IMR-90 (cell line): ENCODE measurements at regions of chr20 and their contacts with region 1.

Region 1: DNA sequence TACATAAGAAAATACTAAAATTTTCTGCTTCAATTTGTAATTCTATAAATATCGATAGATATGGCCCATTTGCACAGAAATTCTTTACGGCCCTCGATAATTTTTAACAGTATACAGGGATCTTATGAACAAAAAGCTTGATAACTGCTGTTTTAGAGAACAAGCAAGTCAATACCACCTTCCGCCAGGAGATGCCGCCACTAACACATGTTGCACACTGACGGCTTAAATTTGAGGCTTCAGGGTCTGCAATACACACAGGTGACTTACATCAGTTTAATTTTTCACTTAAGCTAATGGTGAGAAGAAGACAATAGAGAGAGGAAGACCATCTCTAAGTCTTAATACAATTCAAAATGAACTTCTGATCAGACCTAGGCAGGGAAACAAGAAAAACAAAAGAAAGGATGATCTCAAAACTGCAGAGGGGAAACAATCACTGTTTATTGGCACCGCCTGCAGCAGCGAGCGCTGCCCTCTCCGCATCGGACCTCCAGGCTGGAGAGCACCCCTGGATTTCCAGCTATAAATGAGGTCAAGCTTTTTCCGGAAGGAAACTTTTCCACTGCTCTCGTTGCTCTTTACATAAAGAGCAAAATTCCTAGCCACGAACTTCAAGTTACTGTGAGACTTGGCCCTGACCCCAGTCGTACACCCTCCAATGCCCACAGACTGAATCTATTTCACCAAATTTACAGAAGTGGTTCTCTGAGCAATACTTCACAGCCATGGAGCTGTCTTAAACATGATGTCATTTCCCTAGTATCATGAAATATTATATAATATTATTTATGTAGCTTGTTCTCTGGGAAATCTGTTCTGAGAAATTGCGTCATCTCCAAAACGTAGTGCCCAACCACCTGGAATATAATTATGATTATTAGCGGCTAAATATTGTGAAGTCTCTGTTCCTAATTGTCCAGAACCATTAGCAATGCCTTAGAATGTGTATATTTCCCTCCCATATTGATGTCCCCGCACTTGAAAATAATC is 54.1 kb downstream of the OTOR start:
- DNase-seq: peak; percentile 53
- ATAC-seq: peak; percentile 81
- H3K4me3 ChIP-seq: no peak overlapping the region
- H3K27ac ChIP-seq: no peak overlapping the region
- H3K4me1 ChIP-seq: no peaks in the 10 kb centered on the region
- H3K27me3 ChIP-seq: peaks cover 6% of the 10 kb centered on the region
- CTCF ChIP-seq: peak; percentile 92
- POLR2A ChIP-seq: no peak
- RAD21 ChIP-seq: peak; percentile 87

Region 2: DNA sequence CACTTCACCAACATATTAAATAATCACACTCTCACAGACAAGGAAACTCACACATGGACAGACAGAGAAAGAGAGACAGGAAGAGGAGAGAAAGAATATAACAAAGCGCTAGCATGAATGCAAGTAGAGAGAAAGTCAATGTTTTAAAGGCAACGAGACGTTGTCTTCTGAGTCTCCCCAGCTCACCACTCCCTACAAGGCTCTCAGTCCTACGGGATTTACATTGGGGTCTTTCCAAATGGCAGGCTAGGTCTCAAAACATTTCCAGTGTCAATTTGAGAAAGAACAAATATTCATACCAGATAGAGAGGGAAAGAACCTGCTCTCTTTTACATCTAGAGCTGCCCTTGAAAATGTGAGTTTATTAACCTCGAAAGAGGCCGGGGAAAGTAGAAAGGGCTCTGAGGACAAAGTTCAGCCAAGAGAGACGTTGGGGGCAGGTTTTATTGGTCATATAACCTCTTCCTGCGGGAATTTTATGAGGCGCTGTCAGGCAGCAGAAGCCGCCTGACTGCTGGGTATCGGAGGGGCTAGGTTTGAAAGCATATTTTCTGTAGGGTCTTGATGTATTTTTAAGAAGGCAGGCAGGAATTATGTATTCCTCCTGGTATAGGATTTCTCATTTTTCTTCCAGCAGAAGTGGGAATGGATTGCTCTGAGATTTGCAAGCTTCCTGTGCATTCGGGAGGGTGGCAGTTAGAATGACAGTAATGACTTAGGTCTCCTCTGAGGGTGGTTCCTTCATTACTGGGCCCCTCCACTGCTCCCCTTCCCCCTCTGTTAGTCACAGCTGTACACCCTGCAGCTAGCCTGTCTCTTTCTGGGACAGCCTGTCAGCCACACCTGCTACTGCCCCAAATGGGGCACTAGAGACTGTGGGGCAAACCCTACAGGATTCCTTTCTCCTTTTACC is 194.6 kb before region 1 on chr20:
- CTCF ChIA-PET with region 1: no interaction called
- POLR2A ChIA-PET with region 1: no interaction called
- dilution Hi-C with region 1: no loop called
- in situ Hi-C with region 1: no loop called
- intact Hi-C with region 1: no loop called
- DNase-seq: no peak
- ATAC-seq: no peak
- H3K4me3 ChIP-seq: no peak overlapping the region
- H3K27ac ChIP-seq: no peak overlapping the region
- H3K4me1 ChIP-seq: no peaks in the 10 kb centered on the region
- H3K27me3 ChIP-seq: peaks cover 5% of the 10 kb centered on the region
- CTCF ChIP-seq: no peak
- POLR2A ChIP-seq: no peak
- RAD21 ChIP-seq: no peak

Region 3: GRCh38 chr20:17226410-17227218 is 424.4 kb after region 1 on chr20 and contains the start of gene PCSK2:
- CTCF ChIA-PET with region 1: no interaction called
- POLR2A ChIA-PET with region 1: no interaction called
- dilution Hi-C with region 1: no loop called
- in situ Hi-C with region 1: loop called (anchors 25 kb)
- intact Hi-C with region 1: loop called (anchors 10 kb)
- DNase-seq: peak; percentile 57
- ATAC-seq: peak; percentile 96
- H3K4me3 ChIP-seq: peak within 1 kb of the TSS; percentile 4
- H3K27ac ChIP-seq: no peak within 1 kb of the TSS
- H3K4me1 ChIP-seq: no peaks in the 10 kb centered on the region; the same call in 1 of the 2 replicates
- H3K27me3 ChIP-seq: peaks cover 18% of the 10 kb centered on the region
- CTCF ChIP-seq: no peak
- POLR2A ChIP-seq: no peak
- RAD21 ChIP-seq: no peak
- total RNA-seq, gene PCSK2: not detected in 2 replicates

Region 4: GRCh38 chr20:17281478-17281877 is 479.3 kb after region 1 on chr20:
- CTCF ChIA-PET with region 1: interaction called, 12 read pairs
- POLR2A ChIA-PET with region 1: no interaction called
- dilution Hi-C with region 1: no loop called
- in situ Hi-C with region 1: no loop called
- intact Hi-C with region 1: loop called (anchors 1 kb)
- DNase-seq: peak; percentile 19
- ATAC-seq: no peak
- H3K4me3 ChIP-seq: no peak overlapping the region
- H3K27ac ChIP-seq: no peak overlapping the region
- H3K4me1 ChIP-seq: no peaks in the 10 kb centered on the region
- H3K27me3 ChIP-seq: peaks cover 2% of the 10 kb centered on the region; the same call in 1 of the 2 replicates
- CTCF ChIP-seq: peak; percentile 46
- POLR2A ChIP-seq: no peak
- RAD21 ChIP-seq: peak; percentile 42

Region 5: DNA sequence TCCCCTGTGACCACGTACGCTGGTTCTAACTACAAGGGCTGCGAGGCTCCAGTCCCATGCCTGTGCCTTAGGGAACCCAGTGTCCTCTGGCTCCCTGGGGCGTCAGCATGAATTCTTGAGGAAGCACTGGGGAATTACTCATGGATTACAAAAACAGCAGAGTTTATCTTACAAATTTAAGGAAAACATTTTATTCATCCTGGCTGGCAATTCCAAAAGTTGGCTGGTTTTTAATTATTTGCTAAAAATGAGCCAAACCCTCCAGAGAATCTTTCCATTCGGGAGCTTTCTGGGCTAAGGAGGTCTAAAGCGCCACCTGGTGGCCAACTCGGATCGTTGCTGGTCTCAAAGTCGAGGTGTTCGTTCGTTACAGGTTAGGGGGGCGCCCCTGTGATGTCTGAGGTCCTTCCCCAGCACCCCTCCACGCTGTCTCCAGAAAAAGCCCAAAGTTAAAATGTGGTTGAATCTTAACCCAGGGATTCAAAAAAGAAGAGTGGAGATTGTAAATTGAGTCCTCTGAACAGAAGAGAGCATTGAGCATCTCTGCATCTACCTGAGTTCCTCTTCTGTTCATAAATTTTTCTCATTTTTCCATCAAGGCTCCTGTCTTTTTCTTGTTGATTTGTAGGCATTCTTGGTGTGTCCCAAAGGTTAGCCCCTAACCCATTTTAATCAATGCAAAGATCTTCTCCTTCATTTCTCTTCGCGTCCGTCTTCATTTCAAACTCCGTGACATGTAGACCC is 629.6 kb after region 1 on chr20:
- CTCF ChIA-PET with region 1: interaction called, 113 read pairs
- POLR2A ChIA-PET with region 1: no interaction called
- dilution Hi-C with region 1: loop called (anchors 10 kb)
- in situ Hi-C with region 1: loop called (anchors 5 kb)
- intact Hi-C with region 1: loop called (anchors 1 kb)
- DNase-seq: peak; percentile 44
- ATAC-seq: peak; percentile 75
- H3K4me3 ChIP-seq: no peak overlapping the region
- H3K27ac ChIP-seq: no peak overlapping the region
- H3K4me1 ChIP-seq: no peaks in the 10 kb centered on the region
- H3K27me3 ChIP-seq: peaks cover 16% of the 10 kb centered on the region
- CTCF ChIP-seq: peak; percentile 76
- POLR2A ChIP-seq: no peak
- RAD21 ChIP-seq: peak; percentile 69

Region 6: DNA sequence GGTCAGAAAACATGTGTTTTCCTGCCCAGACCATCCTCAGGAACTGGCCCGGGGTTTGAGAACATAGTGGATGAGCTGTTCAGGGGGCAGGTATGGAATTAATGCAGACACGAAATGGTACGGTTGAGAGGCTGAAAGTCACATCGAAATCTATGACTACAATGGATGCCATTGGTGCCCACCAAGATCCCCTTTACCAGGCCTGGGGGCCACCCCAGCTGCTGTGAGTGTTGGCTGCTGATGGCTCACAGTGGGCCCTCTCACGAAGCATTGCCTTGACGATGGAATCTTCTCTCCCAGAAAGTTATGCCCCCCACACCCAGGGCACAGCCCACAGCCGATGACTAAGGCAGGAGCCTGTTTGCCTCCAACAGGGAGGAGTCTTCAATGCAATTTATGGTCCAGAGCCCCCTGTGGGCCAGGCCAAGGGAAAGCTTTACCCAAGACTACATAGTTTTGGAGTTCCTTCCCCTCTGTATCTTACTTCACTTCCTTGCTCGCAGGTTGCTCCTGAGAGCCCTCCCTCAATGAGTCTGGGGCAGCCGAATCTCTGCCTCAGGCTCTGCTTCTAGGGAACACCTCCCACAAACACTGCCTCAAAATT is 636.3 kb after region 1 on chr20:
- CTCF ChIA-PET with region 1: interaction called, 113 read pairs
- POLR2A ChIA-PET with region 1: no interaction called
- dilution Hi-C with region 1: loop called (anchors 10 kb)
- in situ Hi-C with region 1: loop called (anchors 5 kb)
- intact Hi-C with region 1: no loop called
- DNase-seq: no peak
- ATAC-seq: no peak
- H3K4me3 ChIP-seq: no peak overlapping the region
- H3K27ac ChIP-seq: no peak overlapping the region
- H3K4me1 ChIP-seq: no peaks in the 10 kb centered on the region
- H3K27me3 ChIP-seq: peaks cover 16% of the 10 kb centered on the region
- CTCF ChIP-seq: no peak
- POLR2A ChIP-seq: no peak
- RAD21 ChIP-seq: no peak

Region 7: DNA sequence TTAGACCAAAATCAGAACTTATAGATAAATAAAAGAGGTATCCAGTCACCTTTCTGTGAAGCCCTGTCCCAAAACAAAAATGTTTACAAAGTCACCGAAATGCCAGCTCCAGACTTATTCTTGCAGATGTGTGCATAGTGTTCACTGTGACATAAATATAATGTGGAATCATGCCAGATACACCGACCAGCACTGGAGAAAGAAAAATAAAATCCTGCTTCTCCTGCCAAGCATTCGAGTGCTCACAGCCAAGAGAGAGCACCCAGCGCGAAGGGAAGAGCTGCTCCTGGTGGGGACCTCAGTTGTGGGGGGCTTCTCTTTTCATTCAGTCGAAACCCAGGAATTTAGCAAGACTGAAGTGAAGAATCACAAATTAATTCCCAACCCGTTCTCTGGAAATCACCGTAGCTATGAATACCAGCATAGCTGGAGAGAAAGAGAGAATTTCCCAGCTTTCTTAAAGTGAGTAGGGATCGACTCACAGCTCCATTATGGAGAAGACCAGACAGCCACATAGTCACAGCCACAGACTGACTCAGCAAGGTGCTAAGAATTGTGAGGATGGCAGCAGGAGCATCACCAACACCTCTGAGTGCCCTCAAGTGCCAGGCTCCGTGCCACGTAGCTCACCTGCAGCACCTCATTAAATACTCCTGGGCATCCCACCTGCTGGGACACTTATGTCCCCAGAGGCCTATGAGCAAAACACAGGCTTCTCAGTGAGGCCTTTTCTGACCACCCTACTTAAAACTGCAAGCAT is 695.8 kb after region 1 on chr20:
- CTCF ChIA-PET with region 1: interaction called, 3 read pairs
- POLR2A ChIA-PET with region 1: no interaction called
- dilution Hi-C with region 1: no loop called
- in situ Hi-C with region 1: no loop called
- intact Hi-C with region 1: loop called (anchors 5 kb)
- DNase-seq: peak; percentile 45
- ATAC-seq: peak; percentile 54
- H3K4me3 ChIP-seq: no peak overlapping the region
- H3K27ac ChIP-seq: no peak overlapping the region
- H3K4me1 ChIP-seq: peaks cover 4% of the 10 kb centered on the region; the same call in 1 of the 2 replicates
- H3K27me3 ChIP-seq: peaks cover 14% of the 10 kb centered on the region
- CTCF ChIP-seq: no peak
- POLR2A ChIP-seq: no peak
- RAD21 ChIP-seq: no peak

Region 8: GRCh38 chr20:17611540-17612286 is 809.5 kb after region 1 on chr20:
- CTCF ChIA-PET with region 1: no interaction called
- POLR2A ChIA-PET with region 1: no interaction called
- dilution Hi-C with region 1: no loop called
- in situ Hi-C with region 1: no loop called
- intact Hi-C with region 1: loop called (anchors 5 kb)
- DNase-seq: no peak
- ATAC-seq: peak; percentile 8
- H3K4me3 ChIP-seq: no peak overlapping the region
- H3K27ac ChIP-seq: peak overlapping the region; percentile 21
- H3K4me1 ChIP-seq: no peaks in the 10 kb centered on the region; the same call in 1 of the 2 replicates
- H3K27me3 ChIP-seq: no peaks in the 10 kb centered on the region
- CTCF ChIP-seq: peak; percentile 45
- POLR2A ChIP-seq: no peak
- RAD21 ChIP-seq: peak; percentile 27